Activated B cell treated with CpG ODN at 0.5 μM for 24 hours (primary cell): ENCODE measurements at regions of chr10 and their contacts with region 1.

Region 1: DNA sequence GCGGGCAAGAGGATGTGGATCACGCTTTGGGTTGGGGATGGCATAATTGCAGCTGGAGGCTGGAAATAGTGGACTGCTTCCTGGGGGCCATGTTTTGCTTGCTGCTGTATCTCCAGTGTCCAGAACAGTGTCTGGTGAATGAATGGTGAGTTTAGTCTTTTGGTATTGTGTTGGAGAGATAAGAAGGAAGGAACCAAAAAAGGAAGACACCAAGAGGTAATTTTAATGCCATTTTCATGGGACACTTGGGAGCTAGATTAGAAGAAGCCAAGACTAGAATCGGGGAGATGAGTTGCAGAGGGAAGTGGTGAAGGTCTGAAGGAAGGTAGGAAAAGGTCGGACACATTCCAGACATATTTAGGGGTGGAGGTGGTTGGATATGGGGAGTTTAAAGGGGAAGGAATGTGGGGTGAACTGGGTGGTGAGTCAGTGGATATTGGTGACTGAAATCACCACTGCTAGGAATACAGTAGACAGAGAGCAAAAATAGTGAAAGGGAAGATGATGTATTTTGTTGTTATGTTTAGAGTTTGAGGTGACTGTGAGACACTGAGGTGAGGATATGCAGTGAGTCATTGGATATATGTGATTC is 76.7 kb downstream of the CCNY start:
- DNase-seq: no peak
- ATAC-seq: no peak
- H3K4me3 Mint-ChIP-seq: no peak overlapping the region
- H3K27ac Mint-ChIP-seq: no peak overlapping the region
- H3K4me1 Mint-ChIP-seq: peaks cover 72% of the 10 kb centered on the region
- H3K27me3 Mint-ChIP-seq: no peaks in the 10 kb centered on the region
- CTCF ChIP-seq: no peak

Region 2: DNA sequence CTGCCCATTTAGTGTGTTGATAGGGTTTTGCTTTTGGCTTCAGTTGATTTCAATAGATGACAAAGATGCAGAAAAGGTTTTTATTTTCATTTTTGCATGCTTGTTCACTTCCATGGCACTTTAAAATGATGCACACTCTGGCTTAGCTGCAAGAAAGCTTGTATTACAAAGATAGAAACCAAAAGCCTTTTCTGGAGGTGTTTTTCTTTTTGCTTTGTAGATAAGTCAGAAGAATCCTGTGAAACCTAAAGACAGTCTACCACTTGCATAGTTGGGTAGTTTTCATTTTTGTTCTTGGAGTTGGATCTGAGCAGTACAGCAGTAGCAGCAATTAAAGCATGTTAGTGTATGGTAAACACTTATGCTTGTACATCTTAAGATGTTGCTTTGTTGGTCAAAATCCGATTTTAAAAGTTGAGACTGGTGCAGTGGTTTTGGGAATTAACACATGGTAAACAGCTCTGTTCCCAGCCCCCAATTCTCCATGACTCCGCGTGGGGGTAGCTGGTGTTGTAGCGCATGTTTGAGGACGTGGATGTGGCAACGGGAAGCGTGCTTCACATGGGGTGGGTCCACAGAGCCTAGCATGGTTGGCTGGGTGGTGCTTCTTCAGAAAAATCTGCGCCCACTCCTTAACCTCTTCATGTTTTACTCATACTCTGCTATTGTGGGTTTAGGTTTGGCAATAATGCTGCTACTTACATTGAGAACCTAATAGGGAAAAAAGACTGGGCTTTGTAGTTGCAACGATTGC is 56.8 kb before region 1 on chr10:
- CTCF ChIA-PET with region 1: no interaction called
- POLR2A ChIA-PET with region 1: no interaction called
- intact Hi-C with region 1: loop called (anchors 10 kb)
- DNase-seq: no peak
- ATAC-seq: no peak
- H3K4me3 Mint-ChIP-seq: no peak overlapping the region
- H3K27ac Mint-ChIP-seq: peak overlapping the region; percentile 3
- H3K4me1 Mint-ChIP-seq: peaks cover 81% of the 10 kb centered on the region
- H3K27me3 Mint-ChIP-seq: no peaks in the 10 kb centered on the region
- CTCF ChIP-seq: no peak